RWPE1 (cell line): ENCODE measurements at regions of chr11 and their contacts with region 1.

Region 1: DNA sequence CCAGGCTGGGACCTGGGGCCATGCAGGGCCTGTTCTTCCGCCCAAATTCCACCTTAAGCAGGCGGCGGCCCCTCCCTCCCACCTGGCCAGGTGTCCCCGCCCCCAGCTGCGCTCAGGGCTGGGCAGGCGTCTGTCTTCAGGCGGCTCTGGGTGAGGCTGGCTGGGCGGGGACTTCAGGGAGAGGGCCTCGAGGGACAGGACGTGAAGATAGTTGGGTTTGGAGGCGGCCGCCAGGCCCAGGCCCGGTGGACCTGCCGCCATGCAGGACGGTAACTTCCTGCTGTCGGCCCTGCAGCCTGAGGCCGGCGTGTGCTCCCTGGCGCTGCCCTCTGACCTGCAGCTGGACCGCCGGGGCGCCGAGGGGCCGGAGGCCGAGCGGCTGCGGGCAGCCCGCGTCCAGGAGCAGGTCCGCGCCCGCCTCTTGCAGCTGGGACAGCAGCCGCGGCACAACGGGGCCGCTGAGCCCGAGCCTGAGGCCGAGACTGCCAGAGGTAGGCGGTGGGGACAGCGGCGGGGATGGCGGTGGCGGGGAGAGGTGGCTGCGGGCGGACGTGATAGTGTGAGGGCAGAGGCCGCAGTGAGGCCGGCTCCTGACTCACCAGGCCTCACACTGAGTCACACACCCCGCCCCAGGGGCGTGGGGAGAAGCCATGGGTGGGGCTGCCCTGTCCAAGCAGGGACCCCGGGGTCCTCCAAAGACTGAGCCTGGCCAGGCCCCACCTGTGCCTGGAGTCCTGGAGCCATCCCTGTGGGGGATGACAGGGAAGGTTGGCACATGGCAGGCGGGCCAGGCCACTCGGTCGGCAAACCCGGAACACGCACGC is at the start of gene PKP3:
- DNase-seq: peak; percentile 91
- H3K27ac ChIP-seq: peak within 1 kb of the TSS; percentile 98
- CTCF ChIP-seq: no peak

Region 2: DNA sequence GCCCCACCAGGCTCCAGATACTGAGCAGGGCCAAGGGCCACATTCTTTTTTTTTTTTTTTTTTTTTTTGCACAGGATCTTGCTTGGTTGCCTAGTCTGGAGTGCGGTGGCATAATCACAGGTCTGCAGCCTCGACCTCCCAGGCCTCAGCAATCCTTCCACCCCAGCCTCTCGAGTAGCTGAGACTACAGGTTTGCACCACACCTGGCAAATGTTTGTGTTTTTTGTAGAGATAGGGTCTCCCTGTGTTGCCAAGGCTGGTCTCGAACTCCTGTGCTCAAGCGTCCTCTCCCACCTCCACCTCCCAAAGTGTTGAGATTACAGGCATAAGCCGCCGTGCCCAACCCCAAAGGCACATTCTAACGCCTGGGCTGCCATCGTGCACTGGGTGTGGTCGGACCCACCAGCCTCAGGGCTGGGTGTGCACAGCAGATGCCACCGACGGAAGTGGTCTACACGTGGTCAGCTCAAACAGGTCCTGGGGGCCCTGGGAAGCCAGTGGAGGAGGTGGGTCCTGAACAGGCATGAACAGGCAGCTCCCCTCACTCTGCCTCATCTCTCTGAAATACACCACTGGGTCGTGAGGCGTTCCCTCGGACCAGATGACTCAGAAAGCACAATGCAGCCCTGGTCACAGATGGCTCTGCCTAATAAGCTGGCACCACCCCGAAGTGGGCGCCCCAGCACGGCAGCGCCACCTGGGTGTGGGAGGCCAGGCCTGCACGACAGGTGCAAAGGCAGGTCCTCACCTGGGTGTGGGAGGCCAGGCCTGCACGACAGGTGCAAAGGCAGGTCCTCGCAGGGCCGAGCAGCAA is 30.1 kb before region 1 on chr11:
- CTCF ChIA-PET with region 1: interaction called, 4 read pairs
- POLR2A ChIA-PET with region 1: interaction called, 10 read pairs
- DNase-seq: peak; percentile 85
- H3K27ac ChIP-seq: peak overlapping the region; percentile 79
- CTCF ChIP-seq: peak; percentile 76

Region 3: GRCh38 chr11:507727-508515 is 113.7 kb after region 1 on chr11:
- CTCF ChIA-PET with region 1: no interaction called
- POLR2A ChIA-PET with region 1: no interaction called
- DNase-seq: no peak
- H3K27ac ChIP-seq: peak overlapping the region; percentile 98
- CTCF ChIP-seq: no peak

Region 4: DNA sequence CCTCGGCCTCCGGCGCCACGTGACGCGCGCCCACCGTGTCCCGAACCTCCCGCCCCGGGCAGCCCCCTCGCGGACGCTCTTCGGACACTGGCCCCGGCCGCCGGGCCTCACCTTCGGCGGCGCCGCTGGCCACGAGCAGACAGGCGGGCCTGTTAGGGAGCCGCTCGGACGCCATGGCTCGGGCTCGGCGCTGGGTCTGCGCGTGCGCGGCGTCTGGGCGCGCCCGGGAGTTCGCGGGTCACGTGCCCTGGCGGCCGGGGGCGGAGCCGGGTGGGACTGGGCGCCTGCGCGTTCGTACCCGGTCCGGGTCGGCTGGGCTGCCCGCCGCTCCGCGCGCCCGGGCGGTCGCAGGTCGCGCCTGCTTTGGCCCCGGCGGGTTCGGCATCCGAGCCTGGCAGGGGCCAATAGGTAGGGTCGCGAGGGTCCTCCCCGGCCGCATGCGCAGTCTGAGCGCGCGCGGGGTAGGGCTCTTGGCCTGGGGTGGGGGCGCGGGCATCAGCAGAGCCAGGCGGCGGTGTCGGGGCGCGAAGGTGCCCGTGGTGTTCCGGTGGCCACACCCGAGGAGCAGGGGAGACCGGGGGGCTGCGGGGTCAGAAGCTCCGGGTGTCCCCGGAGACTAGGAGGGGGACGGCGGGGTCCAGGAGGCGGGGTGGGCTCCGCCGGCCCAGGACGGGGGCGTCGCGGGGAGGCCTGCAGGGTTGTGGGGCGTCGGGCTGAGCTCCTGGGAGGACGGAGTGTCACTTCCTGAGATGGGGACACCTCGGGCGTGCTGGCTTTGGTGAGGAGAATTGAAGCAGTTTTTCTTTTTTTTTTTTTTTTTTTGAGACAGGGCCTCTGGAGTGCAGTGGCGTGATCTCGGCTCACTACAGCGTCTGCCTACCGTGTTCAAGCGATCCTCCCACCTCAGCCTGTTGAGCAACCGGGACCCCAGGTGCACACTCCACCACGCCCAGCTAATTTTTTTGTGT is 383.3 kb after region 1 on chr11 and contains the start of gene GATD1:
- CTCF ChIA-PET with region 1: no interaction called
- POLR2A ChIA-PET with region 1: no interaction called
- DNase-seq: peak; percentile 98
- H3K27ac ChIP-seq: peak within 1 kb of the TSS; percentile 81
- CTCF ChIP-seq: no peak